ENCODE measurements at regions of chr11 and their contacts with region 1.

Region 1: GRCh38 chr11:119474682-119475596 is 52.0 kb upstream of the THY1 start:
- DNase-seq: peak; percentile 56
- ATAC-seq: peak; percentile 62
- H3K4me3 ChIP-seq: no peak overlapping the region
- H3K27ac ChIP-seq: no peak overlapping the region
- H3K4me1 ChIP-seq: peaks cover 42% of the 10 kb centered on the region
- H3K27me3 ChIP-seq: no peaks in the 10 kb centered on the region; a peak in 1 of 5 replicates
- CTCF ChIP-seq: peak; percentile 92
- EP300 ChIP-seq: no peak
- POLR2A ChIP-seq: no peak
- RAD21 ChIP-seq: peak; percentile 82

Region 2: DNA sequence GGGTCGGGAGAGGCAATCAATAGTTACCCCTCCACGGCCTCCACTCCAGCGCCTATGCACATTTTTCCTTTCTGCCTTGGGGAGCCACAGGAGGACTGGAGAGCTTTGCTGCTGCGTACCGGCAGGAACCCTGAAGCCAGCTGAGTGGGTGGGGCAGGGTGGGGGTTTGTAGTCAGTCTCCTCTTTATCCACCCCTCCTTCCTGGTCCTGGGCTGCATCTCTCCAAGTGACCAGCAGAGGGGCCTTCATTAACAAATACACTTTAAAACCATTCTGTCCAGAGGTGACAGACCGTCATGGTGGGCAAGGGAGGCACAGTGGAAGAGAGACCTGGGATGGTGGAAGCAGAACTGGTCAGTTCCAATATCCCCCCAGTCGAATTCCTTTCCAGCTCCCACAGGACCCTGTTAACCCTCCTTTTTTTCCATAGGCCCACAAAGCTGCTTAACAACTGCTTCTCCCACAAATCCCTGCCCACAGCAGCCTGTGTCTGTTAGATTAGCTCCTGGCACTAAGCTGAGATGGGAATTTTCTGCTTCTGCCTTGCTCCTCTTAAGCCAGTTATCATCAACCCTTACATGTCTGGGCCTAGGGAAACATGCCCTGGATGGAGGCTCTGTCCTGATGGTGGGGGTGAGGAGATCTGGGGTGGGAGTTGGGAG is 330.0 kb before region 1 on chr11:
- CTCF ChIA-PET with region 1: no interaction called
- POLR2A ChIA-PET with region 1: no interaction called
- in situ Hi-C with region 1: no loop called
- intact Hi-C with region 1: no loop called
- DNase-seq: peak; percentile 77
- ATAC-seq: peak; percentile 90
- H3K4me3 ChIP-seq: no peak overlapping the region
- H3K27ac ChIP-seq: no peak overlapping the region
- H3K4me1 ChIP-seq: peaks cover 6% of the 10 kb centered on the region; the same call in 1 of the 2 replicates
- H3K27me3 ChIP-seq: peaks cover 10 to 33% of the 10 kb centered on the region in 2 experiments
- CTCF ChIP-seq: peak; percentile 75
- EP300 ChIP-seq: no peak
- POLR2A ChIP-seq: no peak
- RAD21 ChIP-seq: 0 out of 2 replicates have a peak, but pooled peaks have one; percentile 22

Region 3: GRCh38 chr11:119196833-119197483 is 278.0 kb before region 1 on chr11:
- CTCF ChIA-PET with region 1: no interaction called
- POLR2A ChIA-PET with region 1: no interaction called
- in situ Hi-C with region 1: loop called (anchors 10 kb)
- intact Hi-C with region 1: no loop called
- DNase-seq: peak; percentile 83
- ATAC-seq: peak; percentile 82
- H3K4me3 ChIP-seq: no peak overlapping the region
- H3K27ac ChIP-seq: no peak overlapping the region
- H3K4me1 ChIP-seq: peaks cover 34% of the 10 kb centered on the region
- H3K27me3 ChIP-seq: peaks cover 3 to 8% of the 10 kb centered on the region in 2 experiments; a peak in 2 of 5 replicates
- CTCF ChIP-seq: peak; percentile 86
- EP300 ChIP-seq: no peak
- POLR2A ChIP-seq: no peak
- RAD21 ChIP-seq: peak; percentile 78

Region 4: DNA sequence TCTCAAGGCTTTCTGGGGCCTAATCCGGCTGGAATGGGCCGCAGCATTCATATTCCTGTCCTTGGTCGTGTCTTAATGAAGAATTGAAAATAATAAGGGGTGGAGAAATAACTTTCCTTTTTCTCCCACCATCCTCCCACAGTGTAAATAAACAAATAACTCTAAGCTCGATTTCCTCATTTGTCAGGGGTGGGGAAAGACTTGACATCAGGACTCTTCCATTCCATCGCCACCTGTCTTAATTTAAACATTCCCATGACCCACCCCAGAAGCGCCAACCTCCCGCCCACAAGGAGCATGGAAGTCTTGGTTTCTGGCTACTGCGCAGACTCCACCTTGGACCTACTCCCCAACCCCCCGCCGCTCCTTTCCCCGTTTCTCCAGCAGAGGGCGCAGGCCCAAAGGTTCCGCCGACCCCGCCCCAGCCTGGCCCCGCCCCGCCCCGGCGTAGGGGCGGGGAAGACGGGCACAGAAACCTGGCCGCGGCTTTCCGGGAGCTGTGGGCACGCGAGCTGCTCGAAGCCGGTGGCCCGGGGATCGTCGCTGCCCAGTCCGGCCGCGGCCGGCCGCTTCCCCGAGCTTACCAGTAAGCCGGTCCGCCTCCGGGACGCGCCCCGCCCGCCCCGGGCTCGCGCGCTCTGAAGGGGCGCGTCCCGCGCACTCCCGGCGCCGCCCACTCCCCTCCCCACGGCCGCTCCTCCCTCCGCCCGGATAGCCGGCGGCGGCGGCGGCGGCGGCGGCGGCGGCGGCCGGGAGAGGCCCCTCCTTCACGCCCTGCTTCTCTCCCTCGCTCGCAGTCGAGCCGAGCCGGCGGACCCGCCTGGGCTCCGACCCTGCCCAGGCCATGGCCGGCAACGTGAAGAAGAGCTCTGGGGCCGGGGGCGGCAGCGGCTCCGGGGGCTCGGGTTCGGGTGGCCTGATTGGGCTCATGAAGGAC is 269.1 kb before region 1 on chr11 and contains the start of gene CBL:
- CTCF ChIA-PET with region 1: no interaction called
- POLR2A ChIA-PET with region 1: no interaction called
- in situ Hi-C with region 1: no loop called
- intact Hi-C with region 1: loop called (anchors 2 kb)
- DNase-seq: peak; percentile 80
- ATAC-seq: peak; percentile 94
- H3K4me3 ChIP-seq: peak within 1 kb of the TSS; percentile 89 to 99 (median 96)
- H3K27ac ChIP-seq: peak within 1 kb of the TSS; percentile 76
- H3K4me1 ChIP-seq: peaks cover 32% of the 10 kb centered on the region
- H3K27me3 ChIP-seq: no peaks in the 10 kb centered on the region; a peak in 1 of 5 replicates
- CTCF ChIP-seq: peak; percentile 86
- EP300 ChIP-seq: no peak
- POLR2A ChIP-seq: peak in 1 of 2 experiments; percentile 53; a peak in 1 of 4 replicates
- RAD21 ChIP-seq: peak; percentile 31; the same call in 1 of the 2 replicates
- total RNA-seq, gene CBL: 7.4 and 11.0 TPM in 2 replicates

Region 5: DNA sequence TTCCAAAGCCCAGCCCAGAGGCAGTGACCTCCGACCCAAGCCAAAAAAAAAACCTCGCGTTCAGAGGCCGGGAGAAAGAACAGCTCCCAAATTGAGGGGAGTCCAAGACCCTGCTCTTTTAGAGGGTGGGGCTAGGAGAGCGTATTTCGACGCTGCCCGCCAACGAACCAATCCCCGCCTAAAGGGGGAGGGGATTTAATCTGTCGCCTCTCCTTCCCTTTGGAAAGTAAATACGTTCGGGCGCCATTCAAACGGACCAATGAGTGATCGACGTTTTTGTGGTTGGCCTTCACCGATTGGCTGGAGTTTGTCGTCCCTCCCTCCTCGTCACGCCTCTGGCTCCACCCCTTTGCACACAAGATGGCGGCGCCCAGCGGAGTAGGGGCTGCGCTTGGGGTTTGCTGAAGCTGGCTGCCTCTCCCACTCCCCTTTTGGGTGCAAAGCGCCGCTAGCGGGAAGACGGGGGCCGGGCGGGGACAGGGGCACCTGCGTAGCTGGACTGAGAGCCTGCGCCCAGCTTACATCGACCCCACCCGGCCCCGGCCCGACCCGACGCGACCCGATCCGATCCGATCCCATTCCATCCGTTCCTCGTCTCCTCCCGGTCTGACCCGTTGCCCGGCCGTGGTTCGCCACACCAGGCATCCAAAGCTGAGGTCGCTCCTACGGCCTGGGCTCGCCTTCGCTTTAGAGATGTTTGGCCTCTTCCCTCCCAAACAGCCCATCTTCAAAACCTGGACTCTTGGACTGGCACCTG is 140.6 kb before region 1 on chr11 and contains the start of gene RNF26:
- CTCF ChIA-PET with region 1: no interaction called
- POLR2A ChIA-PET with region 1: no interaction called
- in situ Hi-C with region 1: loop called (anchors 10 kb)
- intact Hi-C with region 1: loop called (anchors 5 kb)
- DNase-seq: peak; percentile 97
- ATAC-seq: peak; percentile 87
- H3K4me3 ChIP-seq: peak within 1 kb of the TSS; percentile 78 to 94 (median 87)
- H3K27ac ChIP-seq: peak within 1 kb of the TSS; percentile 71
- H3K4me1 ChIP-seq: peaks cover 55% of the 10 kb centered on the region
- H3K27me3 ChIP-seq: no peaks in the 10 kb centered on the region; a peak in 1 of 5 replicates
- CTCF ChIP-seq: no peak
- EP300 ChIP-seq: no peak
- POLR2A ChIP-seq: peak; percentile 79 to 84
- RAD21 ChIP-seq: no peak
- total RNA-seq, gene RNF26: 11.9 and 20.8 TPM in 2 replicates

Region 6: DNA sequence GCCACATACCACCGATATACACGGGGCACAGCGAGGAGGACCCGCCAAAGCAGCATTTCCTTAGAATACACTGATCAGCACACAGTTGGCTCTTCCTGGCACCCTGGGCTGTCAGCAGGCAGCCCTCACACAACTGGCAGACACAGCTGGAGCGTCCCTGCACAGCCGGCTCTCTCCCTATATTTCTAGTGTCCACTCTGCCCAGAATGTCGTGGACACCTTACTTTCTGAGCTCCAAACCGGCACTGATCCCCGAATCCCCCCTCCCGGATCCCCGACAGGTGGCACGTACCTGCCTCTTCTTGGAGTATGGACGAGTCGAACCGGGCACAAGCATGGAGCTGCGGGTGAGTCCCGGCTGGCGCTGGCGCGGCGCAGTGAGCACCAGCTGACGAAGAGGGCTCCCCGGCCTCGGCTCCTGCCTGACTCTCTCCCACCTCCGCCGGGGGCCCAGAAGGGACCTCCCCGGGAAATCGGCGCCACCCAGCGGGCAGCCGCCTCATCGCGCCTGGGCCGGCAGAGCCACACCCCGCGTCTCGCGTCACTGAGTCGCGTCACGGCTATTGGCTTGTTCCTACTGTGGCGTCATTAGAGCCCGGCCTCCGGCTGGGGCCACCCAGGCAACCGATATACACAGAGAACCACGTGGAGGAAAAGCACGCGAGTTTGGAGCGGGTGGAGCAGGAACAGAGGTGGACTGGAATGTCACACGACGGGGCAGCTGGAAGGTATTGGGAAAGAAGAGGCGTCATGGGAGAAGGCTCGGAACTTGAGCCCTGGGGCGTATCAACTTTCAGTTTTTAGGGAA is 93.6 kb before region 1 on chr11 and contains the start of gene USP2:
- CTCF ChIA-PET with region 1: no interaction called
- POLR2A ChIA-PET with region 1: no interaction called
- in situ Hi-C with region 1: loop called (anchors 5 kb)
- intact Hi-C with region 1: loop called (anchors 2 kb)
- DNase-seq: peak; percentile 93
- ATAC-seq: peak; percentile 88
- H3K4me3 ChIP-seq: peak within 1 kb of the TSS; percentile 67 to 82 (median 68)
- H3K27ac ChIP-seq: peak within 1 kb of the TSS; percentile 76
- H3K4me1 ChIP-seq: peaks cover 70% of the 10 kb centered on the region
- H3K27me3 ChIP-seq: no peaks in the 10 kb centered on the region; a peak in 1 of 5 replicates
- CTCF ChIP-seq: peak; percentile 99
- EP300 ChIP-seq: peak in 1 of 2 experiments; percentile 17; a peak in 1 of 4 replicates
- POLR2A ChIP-seq: peak in 1 of 2 experiments; percentile 61; a peak in 1 of 4 replicates
- RAD21 ChIP-seq: peak; percentile 94
- total RNA-seq, gene USP2: 6.0 and 7.2 TPM in 2 replicates

Region 7: DNA sequence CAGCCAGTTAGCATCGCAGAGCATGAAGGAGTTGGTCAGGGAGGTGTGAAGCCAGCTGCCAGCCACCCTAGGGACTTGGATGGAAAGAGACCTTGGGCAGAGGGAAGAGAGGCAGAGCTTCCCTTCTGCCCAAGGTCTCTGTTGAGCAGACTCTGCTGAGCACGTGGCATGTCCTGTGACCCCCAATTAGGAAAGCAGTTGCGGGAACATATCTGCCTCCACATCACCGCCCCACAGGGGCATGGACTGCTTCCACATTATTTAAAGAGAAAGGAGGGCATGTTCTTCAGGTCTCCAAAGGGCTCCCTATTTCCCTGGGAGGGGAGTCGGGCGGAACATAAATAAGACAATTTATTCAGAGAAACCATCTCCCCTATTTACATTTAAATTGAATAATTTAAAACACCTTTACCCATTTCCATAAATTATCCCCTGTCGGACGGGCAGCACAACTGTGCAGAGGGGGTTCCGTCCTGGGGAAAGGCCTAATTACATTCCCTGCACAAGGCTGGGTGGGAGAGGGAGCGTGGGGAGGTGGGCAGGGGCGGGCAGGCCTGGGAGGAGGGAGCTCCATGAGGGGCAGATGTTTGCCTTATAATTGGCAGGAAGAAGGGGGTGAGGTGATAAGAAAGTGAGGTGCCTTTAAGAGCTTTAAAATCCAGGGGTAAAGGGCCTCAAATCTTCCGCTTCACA is 36.8 kb after region 1 on chr11:
- CTCF ChIA-PET with region 1: no interaction called
- POLR2A ChIA-PET with region 1: no interaction called
- in situ Hi-C with region 1: no loop called
- intact Hi-C with region 1: loop called (anchors 1 kb)
- DNase-seq: no peak
- ATAC-seq: no peak
- H3K4me3 ChIP-seq: no peak overlapping the region
- H3K27ac ChIP-seq: no peak overlapping the region
- H3K4me1 ChIP-seq: no peaks in the 10 kb centered on the region
- H3K27me3 ChIP-seq: peaks cover 11 to 55% of the 10 kb centered on the region in 2 experiments; a peak in 4 of 5 replicates
- CTCF ChIP-seq: no peak
- EP300 ChIP-seq: no peak
- POLR2A ChIP-seq: no peak
- RAD21 ChIP-seq: no peak